B cell (primary cell): ENCODE measurements at regions of chr22 and their contacts with region 1.

Region 1: GRCh38 chr22:43955040-43955882 is at the start of gene SAMM50:
- DNase-seq: peak; percentile 92
- ATAC-seq: peak; percentile 94
- H3K4me3 ChIP-seq: peak within 1 kb of the TSS; percentile 76 to 93 (median 82)
- H3K4me3 Mint-ChIP-seq: peak within 1 kb of the TSS; percentile 94
- H3K27ac ChIP-seq: peak within 1 kb of the TSS; percentile 85 to 88
- H3K27ac Mint-ChIP-seq: peak within 1 kb of the TSS; percentile 94
- H3K4me1 ChIP-seq: peaks cover 18 to 23% of the 10 kb centered on the region in 2 donors
- H3K4me1 Mint-ChIP-seq: peaks cover 42% of the 10 kb centered on the region
- H3K27me3 ChIP-seq: peaks cover 0 to 4% (median 0%) of the 10 kb centered on the region in 4 experiments
- H3K27me3 Mint-ChIP-seq: peaks cover 4% of the 10 kb centered on the region
- CTCF ChIP-seq: no peak
- total RNA-seq, gene SAMM50: 43.2 and 47.3 TPM in 2 replicates

Region 2: GRCh38 chr22:43187171-43188099 is 767.8 kb before region 1 on chr22:
- CTCF ChIA-PET with region 1: no interaction called
- POLR2A ChIA-PET with region 1: no interaction called
- intact Hi-C with region 1: loop called (anchors 5 kb)
- DNase-seq: peak; percentile 99
- ATAC-seq: peak; percentile 85
- H3K4me3 ChIP-seq: peak overlapping the region; percentile 47 to 67 (median 58)
- H3K4me3 Mint-ChIP-seq: peak overlapping the region; percentile 88
- H3K27ac ChIP-seq: peak overlapping the region; percentile 95 to 98
- H3K27ac Mint-ChIP-seq: peak overlapping the region; percentile 96
- H3K4me1 ChIP-seq: peaks cover 14 to 19% of the 10 kb centered on the region in 2 donors
- H3K4me1 Mint-ChIP-seq: peaks cover 18% of the 10 kb centered on the region
- H3K27me3 ChIP-seq: peaks cover 0 to 11% (median 0%) of the 10 kb centered on the region in 4 experiments
- H3K27me3 Mint-ChIP-seq: peaks cover 8% of the 10 kb centered on the region
- CTCF ChIP-seq: peak; percentile 70

Region 3: DNA sequence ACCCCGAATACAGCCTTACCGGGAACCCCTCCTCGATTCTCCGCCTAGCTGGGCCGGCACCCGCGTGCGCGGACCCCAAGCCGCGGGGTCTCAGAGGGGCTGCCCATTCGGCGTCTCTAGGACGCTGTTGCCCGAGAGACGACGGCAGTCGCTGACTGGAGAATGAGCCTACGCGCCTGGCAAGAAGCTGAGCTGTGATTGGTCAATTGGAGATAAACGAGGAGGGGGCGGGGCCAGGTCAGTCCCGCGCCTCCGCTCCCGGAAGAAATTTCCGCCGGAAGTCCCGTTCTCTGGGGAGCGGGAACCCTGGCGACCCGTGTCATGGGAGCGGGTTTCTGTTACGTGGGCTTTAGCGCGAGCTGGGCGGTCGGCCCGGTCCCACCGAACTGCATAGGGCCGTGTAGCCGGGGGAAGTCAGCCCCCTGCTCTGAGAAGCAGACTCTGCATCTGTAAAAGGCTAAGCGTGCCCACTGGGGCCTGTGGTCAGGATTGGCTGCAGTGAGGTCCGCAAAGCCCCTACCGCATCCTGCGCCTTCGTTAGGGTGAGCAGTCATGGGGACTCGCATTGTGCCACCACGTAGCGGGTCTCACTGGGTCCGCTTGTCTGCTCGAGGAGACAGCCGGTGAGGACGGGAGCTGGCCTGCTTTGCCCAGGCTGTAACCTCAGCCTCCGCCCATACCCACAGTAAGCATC is 143.0 kb before region 1 on chr22 and contains the start of gene EFCAB6:
- CTCF ChIA-PET with region 1: no interaction called
- POLR2A ChIA-PET with region 1: interaction called, 3 read pairs
- intact Hi-C with region 1: loop called (anchors 2 kb)
- DNase-seq: peak; percentile 94
- ATAC-seq: peak; percentile 95
- H3K4me3 ChIP-seq: peak within 1 kb of the TSS; percentile 39 to 92 (median 77)
- H3K4me3 Mint-ChIP-seq: peak within 1 kb of the TSS; percentile 94
- H3K27ac ChIP-seq: peak within 1 kb of the TSS; percentile 35 to 86
- H3K27ac Mint-ChIP-seq: peak within 1 kb of the TSS; percentile 85
- H3K4me1 ChIP-seq: peaks cover 12 to 17% of the 10 kb centered on the region in 2 donors
- H3K4me1 Mint-ChIP-seq: peaks cover 28% of the 10 kb centered on the region
- H3K27me3 ChIP-seq: no peaks in the 10 kb centered on the region
- H3K27me3 Mint-ChIP-seq: peaks cover 5% of the 10 kb centered on the region
- CTCF ChIP-seq: no peak
- total RNA-seq, gene EFCAB6: 0.07 and 0.39 TPM in 2 replicates

Region 4: GRCh38 chr22:44026630-44027511 is 71.6 kb after region 1 on chr22:
- CTCF ChIA-PET with region 1: no interaction called
- POLR2A ChIA-PET with region 1: interaction called, 3 read pairs
- intact Hi-C with region 1: loop called (anchors 2 kb)
- DNase-seq: peak; percentile 96
- ATAC-seq: peak; percentile 56
- H3K4me3 ChIP-seq: peak overlapping the region in 4 of 5 experiments; percentile 56 to 75 (median 68)
- H3K4me3 Mint-ChIP-seq: peak overlapping the region; percentile 92
- H3K27ac ChIP-seq: peak overlapping the region; percentile 99 to 100
- H3K27ac Mint-ChIP-seq: peak overlapping the region; percentile 97
- H3K4me1 ChIP-seq: peaks cover 64 to 72% of the 10 kb centered on the region in 2 donors
- H3K4me1 Mint-ChIP-seq: peaks cover 77% of the 10 kb centered on the region
- H3K27me3 ChIP-seq: no peaks in the 10 kb centered on the region
- H3K27me3 Mint-ChIP-seq: no peaks in the 10 kb centered on the region
- CTCF ChIP-seq: no peak

Region 5: DNA sequence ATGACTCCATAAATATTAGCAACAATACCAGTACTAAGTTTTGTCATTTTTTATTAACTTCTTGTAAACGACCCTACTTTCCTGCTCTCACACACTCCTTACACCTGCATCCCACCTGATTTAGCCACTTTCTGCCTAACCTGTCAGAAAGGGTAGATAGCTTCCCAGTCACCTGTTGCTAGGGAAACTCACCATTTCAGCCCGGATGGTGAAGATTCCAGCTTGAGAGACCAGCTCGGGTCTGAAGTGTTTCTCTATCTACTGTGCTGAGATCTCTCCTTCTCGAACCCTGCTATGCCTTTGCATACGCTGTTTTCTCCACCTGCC is 225.4 kb after region 1 on chr22 and contains the start of gene PARVG:
- CTCF ChIA-PET with region 1: no interaction called
- POLR2A ChIA-PET with region 1: interaction called, 5 read pairs
- intact Hi-C with region 1: loop called (anchors 5 kb)
- DNase-seq: peak; percentile 86
- ATAC-seq: peak; percentile 67
- H3K4me3 ChIP-seq: peak within 1 kb of the TSS; percentile 70 to 98 (median 92)
- H3K4me3 Mint-ChIP-seq: peak within 1 kb of the TSS; percentile 94
- H3K27ac ChIP-seq: peak within 1 kb of the TSS; percentile 93 to 95
- H3K27ac Mint-ChIP-seq: peak within 1 kb of the TSS; percentile 95
- H3K4me1 ChIP-seq: peaks cover 19 to 39% of the 10 kb centered on the region in 2 donors
- H3K4me1 Mint-ChIP-seq: peaks cover 36% of the 10 kb centered on the region
- H3K27me3 ChIP-seq: no peaks in the 10 kb centered on the region
- H3K27me3 Mint-ChIP-seq: no peaks in the 10 kb centered on the region
- CTCF ChIP-seq: no peak
- total RNA-seq, gene PARVG: 247 and 271 TPM in 2 replicates

Region 6: DNA sequence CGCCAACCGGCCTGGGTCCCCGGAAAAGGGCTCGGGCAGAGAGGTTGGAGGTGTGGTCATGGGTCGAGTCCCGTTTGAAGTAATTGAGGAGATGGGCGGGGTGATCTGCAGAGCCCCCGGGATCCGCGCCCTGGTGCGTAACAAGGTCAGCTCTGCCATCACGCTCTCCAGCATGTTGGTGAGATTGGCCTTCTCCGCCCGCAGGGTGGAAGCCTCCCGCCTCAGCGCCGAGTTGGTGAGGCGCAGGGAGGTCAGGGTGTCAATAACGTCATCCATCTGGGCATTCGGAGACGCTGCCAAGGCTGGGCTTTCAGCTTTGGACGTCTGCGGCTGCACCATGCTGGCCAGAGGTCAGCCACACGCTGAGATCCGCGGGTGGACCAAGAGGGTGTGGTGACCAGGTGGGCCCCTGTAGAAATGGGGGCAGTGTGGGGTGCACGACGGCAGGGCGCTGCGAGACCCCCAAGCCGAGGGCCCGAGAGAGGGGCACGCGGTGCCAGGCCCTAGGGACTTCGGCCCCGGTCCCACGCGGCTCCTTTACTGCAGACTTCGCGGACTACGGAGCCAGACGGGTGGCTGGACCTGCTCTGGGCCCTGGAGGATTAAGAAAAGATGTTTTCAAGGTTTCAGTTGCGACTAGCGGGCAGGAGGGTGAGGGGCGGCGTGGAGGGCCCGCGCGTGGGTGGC is 542.1 kb after region 1 on chr22:
- CTCF ChIA-PET with region 1: no interaction called
- POLR2A ChIA-PET with region 1: no interaction called
- intact Hi-C with region 1: loop called (anchors 2 kb)
- DNase-seq: no peak
- ATAC-seq: no peak
- H3K4me3 ChIP-seq: peak overlapping the region in 4 of 5 experiments; percentile 19 to 68 (median 52)
- H3K4me3 Mint-ChIP-seq: peak overlapping the region; percentile 83
- H3K27ac ChIP-seq: peak overlapping the region in 1 of 2 donors; percentile 70
- H3K27ac Mint-ChIP-seq: peak overlapping the region; percentile 50
- H3K4me1 ChIP-seq: peaks cover 8 to 9% of the 10 kb centered on the region in 2 donors
- H3K4me1 Mint-ChIP-seq: peaks cover 8% of the 10 kb centered on the region
- H3K27me3 ChIP-seq: peaks cover 0 to 17% (median 7%) of the 10 kb centered on the region in 4 experiments
- H3K27me3 Mint-ChIP-seq: peaks cover 6% of the 10 kb centered on the region
- CTCF ChIP-seq: no peak